ENCODE measurements at regions of chr2 and their contacts with region 1.

Region 1: GRCh38 chr2:55232084-55232862 is at the starts of genes CLHC1 and RPS27A:
- DNase-seq: peak; percentile 90 to 97 (median 93)
- ATAC-seq: peak; percentile 95
- H3K4me3 ChIP-seq: peak within 1 kb of the TSS; percentile 75
- H3K4me3 Mint-ChIP-seq: peak within 1 kb of the TSS; percentile 96 to 100 (median 100)
- H3K27ac ChIP-seq: peak within 1 kb of the TSS; percentile 99
- H3K27ac Mint-ChIP-seq: peak within 1 kb of the TSS; percentile 96 to 99 (median 99)
- H3K4me1 ChIP-seq: peaks cover 26 to 30% of the 10 kb centered on the region in 2 donors
- H3K4me1 Mint-ChIP-seq: peaks cover 41 to 84% (median 63%) of the 10 kb centered on the region in 7 donors
- H3K27me3 ChIP-seq: no peaks in the 10 kb centered on the region
- H3K27me3 Mint-ChIP-seq: no peaks in the 10 kb centered on the region
- total RNA-seq, gene CLHC1: 5.3 to 19.5 (median 15.1) TPM
- total RNA-seq, gene RPS27A: 948 to 2,409 (median 2,155) TPM

Region 2: DNA sequence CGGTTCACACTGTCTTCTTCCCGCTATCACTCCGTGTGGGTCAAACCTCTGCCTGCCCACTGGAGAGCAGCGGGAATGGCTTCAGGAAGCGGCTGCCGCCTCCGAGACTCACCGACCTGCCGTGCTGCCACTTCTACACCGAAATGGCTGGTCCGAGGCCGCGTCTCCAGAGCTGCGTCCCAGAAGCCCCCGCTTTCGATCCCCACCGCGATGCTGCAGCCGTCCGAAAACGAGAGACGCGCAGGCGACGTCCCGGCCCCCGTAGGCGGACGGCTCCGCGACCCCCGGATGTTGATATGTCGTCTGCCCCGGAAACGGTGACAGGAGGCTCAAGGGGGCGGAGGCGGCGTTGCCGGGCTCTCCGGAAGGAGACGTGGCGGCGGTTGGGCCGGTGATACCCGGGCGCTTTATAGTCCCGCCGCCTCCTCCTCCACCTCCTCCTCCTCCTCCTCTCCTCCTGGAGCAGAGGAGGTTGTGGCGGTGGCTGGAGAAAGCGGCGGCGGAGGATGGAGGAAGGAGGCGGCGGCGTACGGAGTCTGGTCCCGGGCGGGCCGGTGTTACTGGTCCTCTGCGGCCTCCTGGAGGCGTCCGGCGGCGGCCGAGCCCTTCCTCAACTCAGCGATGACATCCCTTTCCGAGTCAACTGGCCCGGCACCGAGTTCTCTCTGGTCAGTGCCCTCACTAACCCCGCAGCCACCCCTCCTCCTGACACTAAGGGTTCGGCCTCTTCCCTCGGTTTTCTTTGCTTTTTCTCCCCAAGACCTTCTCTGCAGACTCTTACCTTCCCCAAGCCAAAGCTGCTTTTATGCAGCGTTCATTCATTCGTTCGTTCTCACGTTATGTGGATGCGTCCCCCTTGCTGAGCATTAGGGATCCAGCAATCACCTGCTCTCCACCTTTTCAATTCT is 1445.3 kb before region 1 on chr2 and contains the starts of genes ASB3 and ERLEC1:
- CTCF ChIA-PET with region 1: no interaction called
- POLR2A ChIA-PET with region 1: no interaction called
- intact Hi-C with region 1: loop called in 1 of 2 experiments (anchors 5 kb)
- DNase-seq: peak; percentile 69 to 87 (median 83)
- ATAC-seq: peak; percentile 95
- H3K4me3 ChIP-seq: peak within 1 kb of the TSS; percentile 66
- H3K4me3 Mint-ChIP-seq: peak within 1 kb of the TSS; percentile 88 to 99 (median 98)
- H3K27ac ChIP-seq: peak within 1 kb of the TSS; percentile 82
- H3K27ac Mint-ChIP-seq: peak within 1 kb of the TSS; percentile 81 to 99 (median 96)
- H3K4me1 ChIP-seq: peaks cover 14 to 16% of the 10 kb centered on the region in 2 donors
- H3K4me1 Mint-ChIP-seq: peaks cover 37 to 79% (median 67%) of the 10 kb centered on the region in 7 donors
- H3K27me3 ChIP-seq: no peaks in the 10 kb centered on the region
- H3K27me3 Mint-ChIP-seq: no peaks in the 10 kb centered on the region
- total RNA-seq, gene ASB3: 24.9 to 43.2 (median 34.5) TPM
- total RNA-seq, gene ERLEC1: 13.3 to 30.1 (median 26.3) TPM

Region 3: GRCh38 chr2:54558188-54559005 is 673.9 kb before region 1 on chr2:
- CTCF ChIA-PET with region 1: no interaction called
- POLR2A ChIA-PET with region 1: no interaction called
- intact Hi-C with region 1: loop called in 1 of 2 experiments (anchors 5 kb)
- DNase-seq: peak; percentile 48 to 75 (median 64)
- ATAC-seq: peak; percentile 82
- H3K4me3 ChIP-seq: peak overlapping the region; percentile 94
- H3K4me3 Mint-ChIP-seq: peak overlapping the region; percentile 86 to 100 (median 98)
- H3K27ac ChIP-seq: peak overlapping the region; percentile 86
- H3K27ac Mint-ChIP-seq: peak overlapping the region; percentile 90 to 98 (median 96)
- H3K4me1 ChIP-seq: peaks cover 10 to 11% of the 10 kb centered on the region in 2 donors
- H3K4me1 Mint-ChIP-seq: peaks cover 29 to 65% (median 59%) of the 10 kb centered on the region in 7 donors
- H3K27me3 ChIP-seq: no peaks in the 10 kb centered on the region
- H3K27me3 Mint-ChIP-seq: no peaks in the 10 kb centered on the region

Region 4: GRCh38 chr2:55010149-55010591 is 222.1 kb before region 1 on chr2:
- CTCF ChIA-PET with region 1: no interaction called
- POLR2A ChIA-PET with region 1: no interaction called
- intact Hi-C with region 1: loop called in 1 of 2 experiments (anchors 2 kb)
- DNase-seq: peak; percentile 15 to 71 (median 60)
- ATAC-seq: peak; percentile 94
- H3K4me3 ChIP-seq: peak overlapping the region; percentile 58
- H3K4me3 Mint-ChIP-seq: peak overlapping the region; percentile 88 to 97 (median 92)
- H3K27ac ChIP-seq: peak overlapping the region; percentile 68
- H3K27ac Mint-ChIP-seq: peak overlapping the region; percentile 82 to 96 (median 90)
- H3K4me1 ChIP-seq: peaks cover 27 to 29% of the 10 kb centered on the region in 2 donors
- H3K4me1 Mint-ChIP-seq: peaks cover 44 to 91% (median 79%) of the 10 kb centered on the region in 7 donors
- H3K27me3 ChIP-seq: no peaks in the 10 kb centered on the region
- H3K27me3 Mint-ChIP-seq: no peaks in the 10 kb centered on the region

Region 5: DNA sequence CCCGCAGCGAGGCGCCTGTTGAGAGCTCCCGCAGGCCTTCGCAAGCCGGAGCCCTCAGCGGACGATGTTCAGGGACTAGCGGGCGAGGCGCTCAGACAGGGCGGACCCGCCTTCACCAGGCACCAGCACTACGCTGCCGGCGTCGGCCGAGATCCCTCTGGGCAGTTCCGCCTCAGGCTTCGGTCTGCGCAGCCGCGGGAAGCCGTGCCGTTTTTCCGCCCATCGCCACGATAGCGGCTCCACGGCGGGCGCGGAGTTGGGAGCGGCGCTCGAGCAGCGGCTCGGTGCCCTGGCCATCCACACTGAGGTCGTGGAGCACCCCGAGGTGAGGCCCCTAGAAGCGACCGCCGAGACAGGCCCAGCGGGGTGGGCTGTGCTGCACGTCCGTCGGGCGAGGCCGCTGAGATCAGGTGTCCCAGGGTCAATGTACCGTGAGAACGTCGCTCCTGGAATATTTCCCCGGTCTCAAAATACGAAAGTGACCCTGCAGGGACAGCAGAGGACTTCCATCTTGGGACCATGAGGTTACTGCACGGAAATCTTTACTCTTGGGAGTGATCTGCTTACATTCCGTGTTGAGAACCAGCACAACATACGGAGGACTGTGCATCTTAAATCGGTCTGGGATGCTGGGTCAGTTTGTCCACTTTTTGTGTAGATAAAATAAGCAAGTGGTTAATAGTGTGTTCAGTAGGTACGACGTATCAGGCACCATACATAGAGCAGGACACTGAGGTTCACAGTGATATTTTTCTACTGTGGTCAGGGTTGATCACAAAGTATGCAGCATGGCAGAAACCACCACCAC is 50.0 kb after region 1 on chr2:
- CTCF ChIA-PET with region 1: no interaction called
- POLR2A ChIA-PET with region 1: interaction called, 9 read pairs
- intact Hi-C with region 1: loop called (anchors 1 kb)
- DNase-seq: peak; percentile 78 to 87 (median 83)
- ATAC-seq: peak; percentile 99
- H3K4me3 ChIP-seq: peak overlapping the region; percentile 80
- H3K4me3 Mint-ChIP-seq: peak overlapping the region; percentile 87 to 97 (median 92)
- H3K27ac ChIP-seq: peak overlapping the region; percentile 93
- H3K27ac Mint-ChIP-seq: peak overlapping the region; percentile 94 to 99 (median 98)
- H3K4me1 ChIP-seq: peaks cover 0 to 4% of the 10 kb centered on the region in 2 donors
- H3K4me1 Mint-ChIP-seq: peaks cover 11 to 43% (median 29%) of the 10 kb centered on the region in 7 donors
- H3K27me3 ChIP-seq: no peaks in the 10 kb centered on the region
- H3K27me3 Mint-ChIP-seq: peaks cover 0 to 2% (median 0%) of the 10 kb centered on the region in 5 donors

Region 6: GRCh38 chr2:55693181-55694134 is 461.2 kb after region 1 on chr2 and contains the start of gene PNPT1:
- CTCF ChIA-PET with region 1: no interaction called
- POLR2A ChIA-PET with region 1: no interaction called
- intact Hi-C with region 1: loop called in 1 of 2 experiments (anchors 1 kb)
- DNase-seq: peak; percentile 78 to 92 (median 90)
- ATAC-seq: peak; percentile 100
- H3K4me3 ChIP-seq: peak within 1 kb of the TSS; percentile 90
- H3K4me3 Mint-ChIP-seq: peak within 1 kb of the TSS; percentile 94 to 99 (median 97)
- H3K27ac ChIP-seq: peak within 1 kb of the TSS; percentile 72
- H3K27ac Mint-ChIP-seq: peak within 1 kb of the TSS; percentile 92 to 99 (median 96)
- H3K4me1 ChIP-seq: peaks cover 0 to 6% of the 10 kb centered on the region in 2 donors
- H3K4me1 Mint-ChIP-seq: peaks cover 18 to 50% (median 43%) of the 10 kb centered on the region in 7 donors
- H3K27me3 ChIP-seq: no peaks in the 10 kb centered on the region
- H3K27me3 Mint-ChIP-seq: peaks cover 0 to 6% (median 3%) of the 10 kb centered on the region in 5 donors
- total RNA-seq, gene PNPT1: 16.9 to 31.2 (median 18.5) TPM